ENCODE measurements at regions of chr20 and their contacts with region 1.

Region 1: GRCh38 chr20:46893051-46893450 is 1.6 kb upstream of the EYA2 start:
- DNase-seq: no peak
- ATAC-seq: no peak
- H3K4me3 ChIP-seq: no peak overlapping the region
- H3K27ac ChIP-seq: no peak overlapping the region
- H3K4me1 ChIP-seq: no peaks in the 10 kb centered on the region
- H3K27me3 ChIP-seq: peaks cover 20% of the 10 kb centered on the region
- CTCF ChIP-seq: no peak

Region 2: DNA sequence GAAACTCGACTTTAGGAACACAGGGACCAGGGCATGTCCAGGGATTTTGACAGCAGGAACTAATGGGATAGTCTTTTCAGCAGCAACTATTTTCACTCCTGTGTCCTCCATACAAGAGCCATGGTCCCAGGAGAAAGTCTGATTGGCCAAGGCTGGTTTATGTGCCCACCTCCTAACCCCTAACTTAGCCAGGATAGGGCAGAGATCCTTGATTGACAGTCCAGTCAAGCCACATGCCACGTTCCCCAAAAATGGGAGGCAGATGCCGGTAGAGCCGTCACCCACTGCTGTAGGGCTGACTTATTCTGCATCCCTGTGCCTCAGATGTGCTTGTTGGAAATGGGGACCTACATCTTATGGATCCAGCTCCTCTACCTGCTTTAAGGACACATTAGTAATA is 161.3 kb before region 1 on chr20:
- CTCF ChIA-PET with region 1: no interaction called
- POLR2A ChIA-PET with region 1: interaction called, 10 read pairs
- in situ Hi-C with region 1: no loop called
- intact Hi-C with region 1: no loop called
- DNase-seq: no peak
- ATAC-seq: no peak; the same call in 1 of the 2 replicates
- H3K4me3 ChIP-seq: no peak overlapping the region
- H3K27ac ChIP-seq: no peak overlapping the region
- H3K4me1 ChIP-seq: no peaks in the 10 kb centered on the region
- H3K27me3 ChIP-seq: no peaks in the 10 kb centered on the region; the same call in 1 of the 2 replicates
- CTCF ChIP-seq: no peak

Region 3: DNA sequence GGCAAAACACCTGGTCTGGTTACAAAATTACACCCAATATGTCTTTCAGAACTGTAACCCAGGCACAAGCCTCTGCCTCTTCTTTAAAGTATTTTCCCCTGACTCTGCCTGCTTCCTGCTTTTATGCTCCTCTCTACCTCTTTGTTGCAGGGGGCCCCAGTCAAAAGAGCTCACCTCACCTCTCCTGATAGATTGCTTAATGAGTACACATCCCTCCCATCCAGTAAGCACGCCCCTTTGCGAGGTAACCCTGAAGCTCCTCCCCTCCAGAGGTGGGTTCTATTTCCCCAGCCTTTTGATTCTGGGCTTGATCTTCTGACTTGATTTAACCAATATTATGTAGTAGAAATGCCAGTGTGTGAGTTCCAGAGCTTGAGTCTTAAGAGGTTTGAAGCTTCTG is 55.0 kb before region 1 on chr20:
- CTCF ChIA-PET with region 1: no interaction called
- POLR2A ChIA-PET with region 1: no interaction called
- in situ Hi-C with region 1: no loop called
- intact Hi-C with region 1: no loop called
- DNase-seq: no peak
- ATAC-seq: no peak
- H3K4me3 ChIP-seq: no peak overlapping the region
- H3K27ac ChIP-seq: no peak overlapping the region
- H3K4me1 ChIP-seq: no peaks in the 10 kb centered on the region
- H3K27me3 ChIP-seq: no peaks in the 10 kb centered on the region
- CTCF ChIP-seq: no peak

Region 4: DNA sequence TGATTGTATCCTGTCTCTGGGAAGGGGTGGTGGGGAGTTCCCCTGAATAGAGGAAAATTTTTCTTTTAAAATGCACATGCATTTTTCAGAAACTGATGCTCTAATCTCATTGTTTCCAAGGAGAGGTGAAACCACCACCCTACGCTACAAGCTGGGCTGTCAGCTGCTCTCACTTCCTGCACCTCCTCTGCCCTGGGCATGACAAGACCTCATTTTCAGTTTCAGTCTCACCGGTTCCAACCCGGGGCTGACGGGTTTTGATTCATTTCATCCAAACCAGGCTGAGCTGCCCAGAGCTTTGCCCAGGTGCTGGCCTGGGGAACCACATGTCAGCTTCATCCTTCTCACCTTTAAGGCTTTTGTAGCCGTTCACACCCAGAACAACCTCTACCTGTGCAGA is 101.3 kb after region 1 on chr20:
- CTCF ChIA-PET with region 1: no interaction called
- POLR2A ChIA-PET with region 1: interaction called, 15 read pairs
- in situ Hi-C with region 1: no loop called
- intact Hi-C with region 1: no loop called
- DNase-seq: no peak
- ATAC-seq: no peak
- H3K4me3 ChIP-seq: no peak overlapping the region
- H3K27ac ChIP-seq: no peak overlapping the region
- H3K4me1 ChIP-seq: no peaks in the 10 kb centered on the region
- H3K27me3 ChIP-seq: no peaks in the 10 kb centered on the region; the same call in none of the 2 replicates
- CTCF ChIP-seq: no peak

Measured in Panc1 (cell line).